ENCODE measurements at regions of chr11 and their contacts with region 1.

Region 1: GRCh38 chr11:30855383-30856006 is 269.3 kb upstream of the MPPED2 start:
- DNase-seq: no peak
- H3K4me3 ChIP-seq: no peak overlapping the region
- H3K27ac ChIP-seq: no peak overlapping the region
- H3K4me1 ChIP-seq: no peaks in the 10 kb centered on the region
- H3K27me3 ChIP-seq: no peaks in the 10 kb centered on the region
- CTCF ChIP-seq: peak; percentile 63

Region 2: GRCh38 chr11:30749268-30749667 is 106.2 kb before region 1 on chr11:
- CTCF ChIA-PET with region 1: no interaction called
- POLR2A ChIA-PET with region 1: no interaction called
- intact Hi-C with region 1: no loop called
- DNase-seq: no peak
- H3K4me3 ChIP-seq: no peak overlapping the region
- H3K27ac ChIP-seq: no peak overlapping the region
- H3K4me1 ChIP-seq: no peaks in the 10 kb centered on the region
- H3K27me3 ChIP-seq: peaks cover 9% of the 10 kb centered on the region; the same call in 1 of the 2 replicates
- CTCF ChIP-seq: no peak

Region 3: DNA sequence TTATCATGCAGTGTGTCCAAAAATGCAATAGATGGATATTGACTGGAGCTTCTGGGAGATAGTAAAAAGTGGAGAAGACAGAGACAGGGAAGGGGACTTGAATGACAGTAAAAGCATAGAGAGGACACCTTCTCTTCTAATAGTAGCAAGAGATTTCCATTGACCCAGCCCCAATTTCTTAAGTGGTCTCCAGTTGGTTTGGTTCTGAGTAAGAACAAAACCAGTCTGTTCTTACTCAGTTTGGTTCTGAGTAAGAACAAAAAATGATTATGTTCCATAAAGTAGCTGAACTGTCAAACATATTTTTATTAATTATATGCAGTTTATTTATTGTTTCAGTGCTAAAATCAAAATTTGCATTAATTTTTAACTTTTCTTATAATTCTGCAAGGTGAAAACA is 47.4 kb after region 1 on chr11:
- CTCF ChIA-PET with region 1: no interaction called
- POLR2A ChIA-PET with region 1: no interaction called
- intact Hi-C with region 1: loop called (anchors 2 kb)
- DNase-seq: no peak
- H3K4me3 ChIP-seq: no peak overlapping the region
- H3K27ac ChIP-seq: no peak overlapping the region
- H3K4me1 ChIP-seq: no peaks in the 10 kb centered on the region
- H3K27me3 ChIP-seq: no peaks in the 10 kb centered on the region
- CTCF ChIP-seq: no peak

Region 4: GRCh38 chr11:31558001-31558400 is 702.5 kb after region 1 on chr11:
- CTCF ChIA-PET with region 1: no interaction called
- POLR2A ChIA-PET with region 1: no interaction called
- intact Hi-C with region 1: no loop called
- DNase-seq: no peak
- H3K4me3 ChIP-seq: no peak overlapping the region
- H3K27ac ChIP-seq: no peak overlapping the region
- H3K4me1 ChIP-seq: no peaks in the 10 kb centered on the region
- H3K27me3 ChIP-seq: no peaks in the 10 kb centered on the region
- CTCF ChIP-seq: no peak

Measured in PC-9 (cell line).